Lower leg skin (tissue), 4 donors: ENCODE measurements at regions of chr22 and their contacts with region 1.

Region 1: DNA sequence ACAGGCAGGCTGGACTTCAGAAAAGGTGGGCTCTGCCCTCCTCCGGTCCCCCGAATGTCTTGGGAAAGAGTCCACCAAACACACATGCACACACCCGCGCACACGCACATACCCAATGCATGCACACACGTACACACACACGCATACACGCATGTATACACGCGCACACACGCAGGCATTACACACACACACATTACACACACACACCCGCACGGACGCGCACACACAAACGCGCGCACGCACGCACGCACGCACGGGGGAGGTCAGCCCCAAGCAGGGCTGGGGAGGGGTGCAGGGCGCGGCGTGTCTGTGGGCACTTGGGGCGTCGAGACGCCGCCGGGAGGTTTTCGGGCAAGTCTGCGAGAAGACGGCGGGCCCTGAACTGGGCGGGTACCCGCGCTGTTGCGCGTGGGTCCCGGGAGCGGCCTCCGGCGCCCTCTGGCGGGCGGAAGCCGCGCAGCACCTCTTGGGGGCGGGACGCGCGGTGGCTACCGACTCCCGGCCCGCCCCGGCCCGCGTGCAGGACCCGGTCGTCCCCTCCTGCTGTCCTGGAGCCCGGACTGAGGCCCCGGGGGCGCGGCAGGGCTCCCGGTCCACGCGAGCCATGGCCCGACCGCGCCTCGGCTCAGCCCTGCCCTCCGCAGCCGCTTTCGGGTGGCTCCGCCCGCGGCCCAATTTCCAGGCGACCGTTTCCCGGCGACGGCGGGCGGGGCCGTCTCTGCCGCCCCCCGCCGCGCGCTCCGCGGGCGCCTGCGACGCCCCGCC is 3.6 kb downstream of the SEPTIN5 start:
- DNase-seq: peak; percentile 51 to 96
- H3K4me3 ChIP-seq: peak overlapping the region; percentile 14
- CTCF ChIP-seq: peak in 1 of 3 donors; percentile 57
- POLR2A ChIP-seq: no peak

Region 2: DNA sequence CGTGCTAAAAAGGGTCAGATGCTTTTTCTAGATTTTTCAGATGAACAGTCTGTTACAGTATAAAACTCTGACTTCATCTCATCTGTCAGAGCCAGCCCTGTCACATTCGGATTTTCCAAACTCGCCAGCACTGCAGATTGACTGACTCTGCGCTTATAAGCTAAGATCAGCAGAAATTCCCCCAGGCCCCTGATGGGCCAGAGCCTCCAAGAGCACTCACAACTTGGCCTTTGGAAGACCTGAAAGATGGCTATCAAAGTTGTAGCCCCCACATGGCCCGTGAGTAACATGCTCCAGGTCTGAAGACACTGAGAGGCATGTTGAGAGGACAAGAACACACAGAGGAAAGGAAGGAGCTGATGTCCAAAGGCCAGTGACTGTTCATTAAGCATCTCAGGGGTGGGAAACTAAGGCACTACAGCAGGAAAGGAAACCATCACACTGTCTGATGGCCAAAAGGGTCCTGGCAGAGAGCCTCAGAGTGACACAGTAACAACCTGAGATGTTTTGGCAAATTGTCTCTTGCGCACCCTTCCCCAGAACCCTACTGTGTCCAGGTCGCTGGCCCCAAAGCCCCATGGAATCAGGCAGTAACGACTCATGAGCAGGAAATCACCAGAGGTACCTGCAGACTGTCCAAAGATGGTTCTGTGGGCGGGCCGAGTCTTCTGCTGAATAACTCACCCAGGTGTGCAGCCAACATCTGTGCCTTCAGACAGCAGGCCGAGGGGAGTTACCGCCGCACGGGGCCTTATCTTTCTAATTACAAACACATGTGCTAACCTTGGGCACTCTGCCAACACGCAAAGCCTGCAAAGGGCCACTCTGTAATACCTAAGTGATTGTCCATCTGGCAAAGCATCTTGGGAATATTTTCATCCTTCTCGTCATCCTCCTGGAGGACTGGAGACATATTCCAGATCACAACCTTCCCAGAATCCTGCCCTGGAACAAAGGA is 309.9 kb before region 1 on chr22:
- intact Hi-C with region 1: no loop called
- DNase-seq: no peak
- H3K4me3 ChIP-seq: no peak overlapping the region
- CTCF ChIP-seq: no peak
- POLR2A ChIP-seq: no peak

Region 3: GRCh38 chr22:19679522-19680101 is 38.3 kb before region 1 on chr22:
- intact Hi-C with region 1: loop called (anchors 5 kb)
- DNase-seq: no peak
- H3K4me3 ChIP-seq: no peak overlapping the region
- CTCF ChIP-seq: peak in 1 of 3 donors; percentile 63
- POLR2A ChIP-seq: no peak